Activated CD4-positive, alpha-beta T cell treated with anti-CD3 and anti-CD28 coated beads for 36 hours (primary cell): ENCODE measurements at regions of chr1 and their contacts with region 1.

Region 1: DNA sequence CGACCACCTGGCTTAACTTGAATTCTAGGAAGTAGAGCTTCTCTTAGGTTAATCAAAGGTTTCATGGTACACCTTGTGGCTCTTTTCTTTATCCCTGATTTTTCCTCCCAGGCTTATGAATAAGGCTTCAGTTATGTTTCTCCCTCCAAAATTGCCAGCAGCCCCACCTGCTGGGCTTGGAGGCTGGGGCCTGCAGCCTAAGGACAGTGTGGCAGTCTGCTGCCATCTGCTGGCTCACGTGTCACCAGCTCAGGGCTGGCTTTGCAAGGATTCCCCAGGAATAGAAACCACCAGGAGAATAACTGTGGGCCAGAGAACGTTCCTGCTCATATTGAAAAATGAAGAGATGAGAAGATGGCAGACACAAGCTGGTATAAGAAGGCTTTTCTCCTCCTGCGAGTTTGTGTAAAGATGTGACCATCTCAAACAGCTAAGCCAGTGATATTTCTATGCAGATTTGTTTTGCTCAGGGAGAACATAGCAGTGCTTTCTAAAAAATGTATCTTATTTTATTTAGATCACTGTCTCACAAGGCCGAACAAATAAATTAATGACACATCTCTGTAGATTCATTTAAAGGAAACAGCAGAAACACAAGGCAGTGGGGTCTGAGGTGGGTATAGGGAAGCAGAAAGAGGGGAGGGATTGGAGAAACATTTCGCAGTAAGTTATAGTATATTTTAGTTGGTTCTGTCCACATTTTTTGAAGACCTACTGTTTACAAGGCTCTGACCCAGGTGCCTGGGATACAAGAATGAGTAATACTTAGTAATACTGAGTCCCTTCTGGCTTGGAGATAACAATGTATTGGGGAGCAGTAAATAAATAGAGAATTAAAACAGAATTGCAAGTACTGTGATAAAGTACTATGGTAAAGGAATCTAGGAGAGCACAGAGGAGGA is 291.1 kb upstream of the SGIP1 start:
- DNase-seq: peak; percentile 89
- ATAC-seq: peak; percentile 41
- H3K4me3 Mint-ChIP-seq: no peak overlapping the region
- H3K27ac Mint-ChIP-seq: no peak overlapping the region
- H3K4me1 Mint-ChIP-seq: no peaks in the 10 kb centered on the region
- H3K27me3 Mint-ChIP-seq: peaks cover 5% of the 10 kb centered on the region

Region 2: GRCh38 chr1:65717815-65718454 is 525.0 kb before region 1 on chr1:
- CTCF ChIA-PET with region 1: no interaction called
- POLR2A ChIA-PET with region 1: no interaction called
- intact Hi-C with region 1: loop called (anchors 5 to 10 kb)
- DNase-seq: peak; percentile 31
- ATAC-seq: no peak
- H3K4me3 Mint-ChIP-seq: no peak overlapping the region
- H3K27ac Mint-ChIP-seq: no peak overlapping the region
- H3K4me1 Mint-ChIP-seq: no peaks in the 10 kb centered on the region
- H3K27me3 Mint-ChIP-seq: peaks cover 8% of the 10 kb centered on the region

Region 3: DNA sequence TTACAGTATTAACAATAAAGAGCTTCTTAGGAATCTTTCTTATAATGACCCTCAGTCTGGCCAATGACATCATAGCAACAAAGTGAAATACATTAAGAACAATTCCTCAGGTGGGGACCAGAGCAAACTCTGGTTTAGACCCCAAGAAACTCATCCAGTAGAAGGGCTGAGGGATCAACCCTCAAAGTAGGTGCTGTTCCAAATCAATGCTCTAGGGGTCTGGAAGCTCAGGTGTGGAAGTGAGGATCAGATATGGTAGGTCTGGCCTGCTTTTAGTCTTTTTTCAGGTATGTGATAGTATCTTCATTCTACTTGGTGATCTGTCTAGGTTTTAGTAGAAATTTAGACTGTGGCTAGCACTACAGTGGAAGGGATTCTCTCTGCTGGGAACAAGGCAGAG is 158.5 kb before region 1 on chr1:
- CTCF ChIA-PET with region 1: interaction called, 3 read pairs
- POLR2A ChIA-PET with region 1: no interaction called
- intact Hi-C with region 1: loop called in 1 of 2 experiments (anchors 5 kb)
- DNase-seq: no peak
- ATAC-seq: no peak
- H3K4me3 Mint-ChIP-seq: no peak overlapping the region
- H3K27ac Mint-ChIP-seq: no peak overlapping the region
- H3K4me1 Mint-ChIP-seq: no peaks in the 10 kb centered on the region
- H3K27me3 Mint-ChIP-seq: peaks cover 8% of the 10 kb centered on the region

Region 4: GRCh38 chr1:66253330-66253921 is 10.5 kb after region 1 on chr1:
- CTCF ChIA-PET with region 1: interaction called, 57 read pairs
- POLR2A ChIA-PET with region 1: interaction called, 6 read pairs
- intact Hi-C with region 1: loop called (anchors 1 kb)
- DNase-seq: no peak
- ATAC-seq: peak; percentile 81
- H3K4me3 Mint-ChIP-seq: no peak overlapping the region
- H3K27ac Mint-ChIP-seq: no peak overlapping the region
- H3K4me1 Mint-ChIP-seq: peaks cover 49% of the 10 kb centered on the region
- H3K27me3 Mint-ChIP-seq: no peaks in the 10 kb centered on the region

Region 5: DNA sequence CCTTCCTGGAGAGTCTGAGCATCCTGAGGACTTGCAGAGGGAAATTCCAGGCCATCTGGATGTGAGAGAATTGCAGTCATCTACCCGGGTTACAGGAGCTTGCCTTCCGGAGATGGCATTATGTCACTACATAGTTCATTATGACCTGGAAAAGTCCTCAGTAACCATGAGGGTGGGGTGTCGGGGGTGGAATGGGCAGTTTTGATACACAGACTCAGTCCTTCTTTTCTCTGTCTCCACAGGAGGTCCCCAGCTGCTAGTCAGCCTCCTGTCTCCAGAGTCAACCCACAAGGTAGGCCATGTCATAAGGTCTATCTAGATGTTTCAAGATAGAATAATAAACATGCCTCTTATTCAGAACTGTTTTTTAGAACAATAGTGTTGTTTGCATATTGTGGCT is 22.9 kb after region 1 on chr1:
- CTCF ChIA-PET with region 1: no interaction called
- POLR2A ChIA-PET with region 1: no interaction called
- intact Hi-C with region 1: no loop called
- DNase-seq: no peak
- ATAC-seq: no peak
- H3K4me3 Mint-ChIP-seq: no peak overlapping the region
- H3K27ac Mint-ChIP-seq: no peak overlapping the region
- H3K4me1 Mint-ChIP-seq: peaks cover 70% of the 10 kb centered on the region
- H3K27me3 Mint-ChIP-seq: no peaks in the 10 kb centered on the region

Region 6: DNA sequence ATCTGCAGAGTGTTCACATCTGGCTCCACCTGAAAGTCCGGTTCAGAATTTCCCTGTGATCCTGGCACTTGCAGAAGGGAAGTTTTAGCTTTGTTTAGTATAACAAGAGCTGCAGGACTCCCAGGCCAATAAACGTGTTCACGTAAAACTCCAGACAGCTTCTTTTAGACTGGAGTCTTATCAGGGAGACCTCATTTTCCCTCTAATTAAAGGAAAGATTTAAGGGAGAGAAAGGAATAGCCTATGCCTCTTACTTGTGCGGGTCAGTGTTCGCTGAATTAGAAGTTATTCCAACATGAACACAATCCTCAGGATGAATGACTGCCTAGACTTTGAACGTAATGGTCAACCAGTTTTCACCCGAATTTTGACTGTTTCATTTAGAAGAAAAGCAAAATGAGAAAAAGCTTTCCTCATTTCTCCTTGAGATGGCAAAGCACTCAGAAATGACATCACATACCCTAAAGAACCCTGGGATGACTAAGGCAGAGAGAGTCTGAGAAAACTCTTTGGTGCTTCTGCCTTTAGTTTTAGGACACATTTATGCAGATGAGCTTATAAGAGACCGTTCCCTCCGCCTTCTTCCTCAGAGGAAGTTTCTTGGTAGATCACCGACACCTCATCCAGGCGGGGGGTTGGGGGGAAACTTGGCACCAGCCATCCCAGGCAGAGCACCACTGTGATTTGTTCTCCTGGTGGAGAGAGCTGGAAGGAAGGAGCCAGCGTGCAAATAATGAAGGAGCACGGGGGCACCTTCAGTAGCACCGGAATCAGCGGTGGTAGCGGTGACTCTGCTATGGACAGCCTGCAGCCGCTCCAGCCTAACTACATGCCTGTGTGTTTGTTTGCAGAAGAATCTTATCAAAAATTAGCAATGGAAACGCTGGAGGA is 89.0 kb after region 1 on chr1:
- CTCF ChIA-PET with region 1: interaction called, 15 read pairs
- POLR2A ChIA-PET with region 1: interaction called, 7 read pairs
- intact Hi-C with region 1: loop called in 1 of 2 experiments (anchors 2 kb)
- DNase-seq: peak; percentile 75
- ATAC-seq: peak; percentile 40
- H3K4me3 Mint-ChIP-seq: peak overlapping the region; percentile 91
- H3K27ac Mint-ChIP-seq: peak overlapping the region; percentile 98
- H3K4me1 Mint-ChIP-seq: peaks cover 44% of the 10 kb centered on the region
- H3K27me3 Mint-ChIP-seq: no peaks in the 10 kb centered on the region

Region 7: GRCh38 chr1:66396212-66396890 is 153.5 kb after region 1 on chr1:
- CTCF ChIA-PET with region 1: interaction called, 5 read pairs
- POLR2A ChIA-PET with region 1: no interaction called
- intact Hi-C with region 1: loop called (anchors 1 kb)
- DNase-seq: peak; percentile 39
- ATAC-seq: peak; percentile 56
- H3K4me3 Mint-ChIP-seq: no peak overlapping the region
- H3K27ac Mint-ChIP-seq: no peak overlapping the region
- H3K4me1 Mint-ChIP-seq: peaks cover 39% of the 10 kb centered on the region
- H3K27me3 Mint-ChIP-seq: peaks cover 2% of the 10 kb centered on the region

Region 8: DNA sequence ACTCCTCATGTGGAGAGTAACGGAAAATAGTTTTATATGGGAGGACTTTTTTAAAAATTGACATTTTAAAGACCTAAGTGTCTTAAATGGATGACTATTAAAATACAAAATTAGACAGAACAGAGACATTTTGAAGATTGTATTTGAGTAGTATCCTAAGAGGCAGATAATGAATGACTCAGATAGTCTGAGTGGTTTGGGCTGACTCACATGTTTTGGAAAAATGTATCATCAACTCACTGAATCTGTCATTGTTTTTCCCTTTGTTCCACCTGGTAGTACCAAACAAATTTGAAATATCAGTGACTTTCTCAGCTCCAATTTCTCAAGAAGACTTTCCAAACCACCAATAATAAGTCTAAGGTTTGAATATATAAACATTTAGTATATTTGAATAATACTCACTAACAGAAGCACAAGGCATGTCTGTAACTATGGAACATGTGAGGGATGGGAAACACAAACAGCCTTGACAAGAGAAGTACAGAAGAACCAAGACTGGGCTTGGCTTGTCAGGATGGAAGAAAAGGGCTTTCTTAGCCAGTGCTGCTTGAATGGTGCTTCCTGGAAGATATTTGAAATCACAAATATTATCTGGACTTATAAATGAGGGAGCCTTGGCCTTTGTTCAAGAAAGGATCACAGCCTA is 381.6 kb after region 1 on chr1:
- CTCF ChIA-PET with region 1: no interaction called
- POLR2A ChIA-PET with region 1: no interaction called
- intact Hi-C with region 1: loop called in 1 of 2 experiments (anchors 10 kb)
- DNase-seq: no peak
- ATAC-seq: peak; percentile 83
- H3K4me3 Mint-ChIP-seq: no peak overlapping the region
- H3K27ac Mint-ChIP-seq: peak overlapping the region; percentile 44
- H3K4me1 Mint-ChIP-seq: peaks cover 15% of the 10 kb centered on the region
- H3K27me3 Mint-ChIP-seq: peaks cover 3% of the 10 kb centered on the region